ENCODE measurements at regions of chr22 and their contacts with region 1.

Region 1: GRCh38 chr22:42090596-42091454 is at the start of gene NDUFA6:
- DNase-seq: peak; percentile 100
- total RNA-seq, gene NDUFA6: 48.1 to 52.1 TPM

Region 2: DNA sequence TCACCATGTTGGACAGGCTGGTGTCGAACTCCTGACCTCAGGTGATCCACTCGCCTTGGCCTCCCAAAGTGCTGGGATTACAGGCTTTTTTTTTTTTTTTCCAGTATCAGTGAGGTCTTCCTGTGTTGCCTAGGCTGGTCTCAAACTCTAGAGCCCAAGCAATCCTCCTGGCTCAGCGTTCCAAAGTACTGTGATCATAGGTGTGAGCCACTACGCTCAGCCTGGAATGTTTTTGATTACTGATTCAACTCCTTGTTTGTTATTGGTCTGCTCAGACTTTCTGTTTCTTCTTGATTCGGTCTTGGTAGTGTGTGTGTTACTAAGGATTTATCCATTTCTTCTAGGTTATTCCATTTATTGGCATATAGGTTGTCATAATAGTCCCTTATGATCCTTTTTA is 51.6 kb before region 1 on chr22:
- intact Hi-C with region 1: no loop called
- DNase-seq: no peak

Region 3: DNA sequence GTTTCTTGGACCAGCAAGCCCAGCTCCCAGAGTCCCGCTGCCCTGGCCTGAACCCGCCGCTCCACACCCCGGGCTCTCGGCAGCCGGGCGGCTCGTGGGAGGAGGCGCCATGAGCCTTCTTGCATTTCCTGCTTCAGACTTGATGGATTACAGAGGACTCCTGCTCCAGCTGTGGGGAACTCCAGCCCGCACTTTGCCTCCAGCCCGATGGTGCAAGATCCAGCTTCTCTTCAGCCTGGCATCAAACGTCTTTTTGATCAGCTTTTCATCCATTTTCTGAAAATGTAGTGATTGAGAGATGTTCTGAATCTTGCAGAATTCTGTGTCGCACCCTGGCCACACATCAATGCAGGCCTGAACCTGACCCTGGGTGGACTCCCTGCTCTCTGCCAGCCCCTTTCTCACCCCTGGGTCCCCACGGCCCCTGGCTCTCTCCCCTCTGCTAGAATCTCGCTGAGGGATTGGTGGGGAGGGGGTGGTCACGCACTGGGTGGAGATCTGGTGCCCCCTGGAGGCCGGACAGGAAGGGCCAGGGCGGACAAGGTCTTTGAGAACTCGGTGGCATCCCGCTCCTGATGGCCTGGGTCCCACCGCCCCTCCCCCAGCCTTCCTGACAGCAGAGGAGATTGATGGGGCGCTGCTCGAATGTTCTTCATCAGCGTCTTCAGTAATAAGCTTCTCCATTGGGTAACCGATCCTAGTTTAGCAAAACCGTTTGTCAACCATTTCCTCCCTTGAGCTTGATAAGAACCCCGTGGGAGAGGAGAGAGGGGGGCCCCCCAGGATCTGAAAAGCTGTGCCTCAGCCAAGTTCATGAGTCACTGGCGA is 353.5 kb after region 1 on chr22:
- intact Hi-C with region 1: loop called in 1 of 2 experiments (anchors 5 kb)
- DNase-seq: peak; percentile 94